ENCODE measurements at regions of chr17 and their contacts with region 1.

Region 1: GRCh38 chr17:48593840-48594537 is 410 bp upstream of the HOXB5 start:
- DNase-seq: no peak
- H3K4me3 ChIP-seq: peak overlapping the region; percentile 54 to 64 (median 60)
- H3K27ac ChIP-seq: peak overlapping the region; percentile 42 to 72 (median 60)
- H3K4me1 ChIP-seq: peaks cover 33 to 61% (median 56%) of the 10 kb centered on the region in 4 donors
- H3K27me3 ChIP-seq: peaks cover 6 to 73% (median 31%) of the 10 kb centered on the region in 4 donors
- CTCF ChIP-seq: peak in 2 of 3 experiments; percentile 97 to 99
- EP300 ChIP-seq: no peak
- POLR2A ChIP-seq: no peak

Region 2: DNA sequence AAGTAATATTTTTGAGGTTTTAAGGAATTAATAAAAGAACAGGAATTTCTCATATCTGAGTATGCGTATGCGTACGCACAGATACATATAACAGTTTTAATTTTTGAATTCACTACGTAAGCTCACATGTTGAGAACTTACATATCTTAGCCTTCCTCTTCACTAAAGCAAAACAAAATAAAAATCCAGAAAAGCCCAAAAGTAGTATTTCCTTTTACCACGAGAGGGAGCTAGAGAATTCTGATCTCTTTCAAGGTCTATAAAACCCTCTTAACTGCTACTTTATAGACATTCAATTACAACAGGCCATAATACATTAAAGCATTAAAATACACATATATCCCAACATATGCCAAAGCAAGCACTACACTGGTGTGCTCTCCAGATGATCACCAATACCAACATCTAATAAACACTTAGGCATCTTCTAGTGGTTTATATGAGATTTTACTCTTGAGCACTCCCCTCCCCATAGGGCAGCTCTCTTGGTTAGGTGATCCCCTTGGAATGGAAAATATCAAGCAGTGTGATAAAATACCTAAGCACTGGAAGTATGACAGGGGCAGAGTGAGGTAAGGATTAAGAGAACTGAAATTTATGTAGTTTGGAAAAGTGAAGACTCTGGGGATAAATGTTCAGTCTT is 258.0 kb before region 1 on chr17:
- intact Hi-C with region 1: loop called (anchors 5 kb)
- DNase-seq: no peak
- H3K4me3 ChIP-seq: no peak overlapping the region
- H3K27ac ChIP-seq: no peak overlapping the region
- H3K4me1 ChIP-seq: no peaks in the 10 kb centered on the region
- H3K27me3 ChIP-seq: peaks cover 0 to 84% (median 23%) of the 10 kb centered on the region in 4 donors
- CTCF ChIP-seq: peak; percentile 76 to 79 (median 78)
- EP300 ChIP-seq: no peak
- POLR2A ChIP-seq: no peak

Region 3: DNA sequence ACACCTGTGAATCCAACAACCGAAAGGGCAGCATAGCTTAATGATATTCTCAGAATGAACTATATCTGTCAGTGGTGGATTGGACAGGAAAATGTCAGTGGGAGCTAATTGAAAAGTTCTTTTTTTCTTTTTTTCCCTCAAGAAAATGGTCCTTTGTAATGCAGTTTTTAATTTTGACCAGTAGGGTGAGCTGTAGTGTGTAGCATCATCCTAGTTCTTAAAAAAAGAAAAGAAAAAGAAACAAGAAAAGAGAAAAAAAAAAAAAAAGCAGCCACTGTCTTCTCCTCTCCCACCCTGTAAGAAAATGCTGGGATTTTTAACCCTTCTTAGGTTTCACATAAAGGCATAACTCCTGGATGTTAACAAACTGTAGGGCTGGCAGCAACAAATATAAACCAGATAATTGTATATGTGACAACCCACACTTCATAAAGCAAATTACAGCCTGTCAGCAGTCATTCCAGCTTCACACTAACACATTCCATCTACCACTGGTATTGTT is 242.1 kb before region 1 on chr17:
- intact Hi-C with region 1: loop called (anchors 1 kb)
- DNase-seq: no peak
- H3K4me3 ChIP-seq: no peak overlapping the region
- H3K27ac ChIP-seq: no peak overlapping the region
- H3K4me1 ChIP-seq: no peaks in the 10 kb centered on the region
- H3K27me3 ChIP-seq: peaks cover 0 to 40% (median 0%) of the 10 kb centered on the region in 4 donors
- CTCF ChIP-seq: peak; percentile 57 to 77 (median 67)
- EP300 ChIP-seq: no peak
- POLR2A ChIP-seq: no peak

Region 4: DNA sequence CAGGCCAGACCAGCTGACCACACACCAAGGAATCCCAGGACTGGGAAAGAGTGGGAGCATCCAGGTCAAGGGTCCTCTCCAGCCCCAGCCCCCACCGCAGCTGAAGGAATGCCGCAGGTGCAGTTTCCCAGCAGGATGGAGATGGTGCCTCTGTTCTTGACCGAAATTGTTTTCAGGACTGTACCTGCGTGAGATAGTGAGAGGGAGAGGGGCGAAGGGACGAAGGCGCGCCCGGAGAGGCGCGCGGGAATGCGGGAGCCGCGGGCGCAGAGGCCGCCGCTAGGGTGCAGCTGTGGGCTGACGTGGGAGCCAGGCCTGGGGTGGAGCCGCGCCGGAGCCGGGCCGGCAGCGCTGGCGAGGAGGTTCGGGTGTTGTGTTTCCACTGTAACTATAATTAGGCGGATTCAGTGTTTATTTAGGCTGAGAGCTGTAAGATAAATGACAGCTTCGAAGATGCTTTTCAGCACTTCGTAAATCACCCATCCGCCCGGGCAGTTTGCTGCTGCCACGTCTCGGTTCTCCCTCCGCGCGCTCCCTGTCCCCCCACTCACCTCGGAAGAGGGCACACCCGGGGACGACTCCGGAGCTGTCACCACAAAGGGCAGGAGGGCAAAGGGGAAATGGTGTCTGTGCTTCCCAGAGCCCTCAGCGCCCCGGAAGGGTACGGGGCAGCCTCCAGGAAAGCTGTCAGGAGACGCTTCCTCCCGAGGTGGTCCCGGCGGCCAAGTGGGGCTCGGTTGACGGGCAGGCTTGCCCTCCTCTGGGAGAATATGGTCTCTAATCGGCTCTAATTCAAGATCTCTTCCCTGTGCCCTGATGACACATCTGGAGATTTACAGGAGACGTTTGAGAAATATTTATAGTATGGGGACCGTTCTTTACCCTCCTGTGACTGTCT is 101.3 kb before region 1 on chr17:
- intact Hi-C with region 1: loop called (anchors 2 kb)
- DNase-seq: no peak
- H3K4me3 ChIP-seq: peak overlapping the region; percentile 40 to 55 (median 44)
- H3K27ac ChIP-seq: peak overlapping the region; percentile 45 to 63 (median 52)
- H3K4me1 ChIP-seq: peaks cover 12 to 29% (median 18%) of the 10 kb centered on the region in 4 donors
- H3K27me3 ChIP-seq: no peaks in the 10 kb centered on the region
- CTCF ChIP-seq: peak in 2 of 3 experiments; percentile 92 to 95
- EP300 ChIP-seq: no peak
- POLR2A ChIP-seq: no peak

Measured in esophagus muscularis mucosa (tissue), 4 donors.